T-cell (primary cell): ENCODE measurements at regions of chr18 and their contacts with region 1.

Region 1: GRCh38 chr18:23468753-23469459 is 15.8 kb downstream of the RIOK3 start:
- DNase-seq: no peak
- ATAC-seq: no peak
- H3K4me3 ChIP-seq: no peak overlapping the region
- H3K4me3 Mint-ChIP-seq: no peak overlapping the region
- H3K27ac ChIP-seq: no peak overlapping the region
- H3K27ac Mint-ChIP-seq: no peak overlapping the region
- H3K4me1 ChIP-seq: no peaks in the 10 kb centered on the region
- H3K4me1 Mint-ChIP-seq: peaks cover 0 to 13% (median 1%) of the 10 kb centered on the region in 3 donors
- H3K27me3 ChIP-seq: no peaks in the 10 kb centered on the region
- H3K27me3 Mint-ChIP-seq: no peaks in the 10 kb centered on the region

Region 2: GRCh38 chr18:23406271-23406787 is 62.6 kb before region 1 on chr18:
- CTCF ChIA-PET with region 1: no interaction called
- POLR2A ChIA-PET with region 1: no interaction called
- DNase-seq: no peak
- ATAC-seq: no peak
- H3K4me3 ChIP-seq: no peak overlapping the region
- H3K4me3 Mint-ChIP-seq: no peak overlapping the region
- H3K27ac ChIP-seq: no peak overlapping the region
- H3K27ac Mint-ChIP-seq: no peak overlapping the region
- H3K4me1 ChIP-seq: no peaks in the 10 kb centered on the region
- H3K4me1 Mint-ChIP-seq: no peaks in the 10 kb centered on the region
- H3K27me3 ChIP-seq: no peaks in the 10 kb centered on the region
- H3K27me3 Mint-ChIP-seq: no peaks in the 10 kb centered on the region

Region 3: DNA sequence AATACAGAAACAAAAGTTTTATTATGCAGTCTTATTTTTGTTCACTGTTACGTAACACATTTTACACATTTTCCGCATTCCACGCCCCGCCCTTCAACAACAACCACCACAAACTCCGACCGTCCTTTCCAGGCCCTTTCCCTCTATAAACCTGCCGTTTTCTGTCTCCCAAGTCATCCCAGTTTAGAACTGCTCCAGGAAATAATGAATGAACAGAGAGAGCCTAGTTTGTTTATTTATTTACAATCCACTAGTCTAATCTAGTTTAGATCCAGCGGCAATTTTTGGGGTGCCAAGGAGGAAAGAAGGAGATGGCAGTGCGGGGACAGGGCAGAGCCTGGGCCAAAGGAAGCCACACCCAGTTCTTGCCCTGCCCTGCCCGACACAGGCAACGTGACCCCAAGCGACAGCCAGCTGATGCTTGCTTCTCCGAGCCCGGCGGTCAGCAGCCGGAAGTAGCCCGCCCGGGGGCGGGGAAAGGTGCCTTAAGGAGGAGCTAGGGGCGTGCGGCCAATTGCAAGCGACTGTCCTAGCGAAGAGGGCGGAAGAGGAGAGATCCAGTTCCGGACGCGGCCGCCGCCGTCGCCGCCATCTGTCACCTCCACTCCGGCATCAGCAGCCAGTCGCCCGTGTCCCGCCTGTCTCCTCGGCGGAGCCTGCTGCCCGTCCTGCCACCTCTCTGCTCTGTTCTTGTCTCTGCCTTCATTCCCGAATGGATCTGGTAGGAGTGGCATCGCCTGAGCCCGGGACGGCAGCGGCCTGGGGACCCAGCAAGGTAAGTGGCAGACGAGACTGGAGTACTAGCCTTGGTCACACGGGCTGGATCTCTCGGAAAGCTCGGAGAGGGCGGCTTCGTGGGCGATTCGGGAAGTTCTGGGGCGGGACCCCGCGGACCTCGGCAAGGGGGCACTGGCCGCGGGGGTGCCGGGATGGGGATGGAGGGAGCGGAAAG is 15.9 kb before region 1 on chr18 and contains the start of gene RIOK3:
- CTCF ChIA-PET with region 1: interaction called in 1 of 2 experiments, 3 read pairs
- POLR2A ChIA-PET with region 1: interaction called, 4 to 12 read pairs
- DNase-seq: peak; percentile 68 to 90 (median 78)
- ATAC-seq: peak; percentile 94 to 96 (median 95)
- H3K4me3 ChIP-seq: peak within 1 kb of the TSS; percentile 81 to 96
- H3K4me3 Mint-ChIP-seq: peak within 1 kb of the TSS; percentile 98 to 100 (median 99)
- H3K27ac ChIP-seq: peak within 1 kb of the TSS; percentile 66
- H3K27ac Mint-ChIP-seq: peak within 1 kb of the TSS; percentile 94 to 96
- H3K4me1 ChIP-seq: peaks cover 15 to 19% of the 10 kb centered on the region in 2 experiments
- H3K4me1 Mint-ChIP-seq: peaks cover 46 to 57% (median 48%) of the 10 kb centered on the region in 3 donors
- H3K27me3 ChIP-seq: no peaks in the 10 kb centered on the region
- H3K27me3 Mint-ChIP-seq: no peaks in the 10 kb centered on the region
- total RNA-seq, gene RIOK3: 63.1 to 99.2 (median 65.3) TPM

Region 4: GRCh38 chr18:23529597-23529996 is 60.7 kb after region 1 on chr18:
- CTCF ChIA-PET with region 1: no interaction called
- POLR2A ChIA-PET with region 1: interaction called, 4 to 12 read pairs
- DNase-seq: no peak
- ATAC-seq: no peak
- H3K4me3 ChIP-seq: no peak overlapping the region
- H3K4me3 Mint-ChIP-seq: no peak overlapping the region
- H3K27ac ChIP-seq: no peak overlapping the region
- H3K27ac Mint-ChIP-seq: peak overlapping the region in 1 of 2 donors; percentile 1
- H3K4me1 ChIP-seq: no peaks in the 10 kb centered on the region
- H3K4me1 Mint-ChIP-seq: peaks cover 0 to 4% (median 0%) of the 10 kb centered on the region in 3 donors
- H3K27me3 ChIP-seq: no peaks in the 10 kb centered on the region
- H3K27me3 Mint-ChIP-seq: no peaks in the 10 kb centered on the region

Region 5: GRCh38 chr18:23857756-23858155 is 388.9 kb after region 1 on chr18:
- CTCF ChIA-PET with region 1: no interaction called
- POLR2A ChIA-PET with region 1: no interaction called
- DNase-seq: no peak
- ATAC-seq: no peak
- H3K4me3 ChIP-seq: no peak overlapping the region
- H3K4me3 Mint-ChIP-seq: no peak overlapping the region
- H3K27ac ChIP-seq: no peak overlapping the region
- H3K27ac Mint-ChIP-seq: no peak overlapping the region
- H3K4me1 ChIP-seq: peaks cover 2 to 4% of the 10 kb centered on the region in 2 experiments
- H3K4me1 Mint-ChIP-seq: peaks cover 13 to 16% (median 15%) of the 10 kb centered on the region in 3 donors
- H3K27me3 ChIP-seq: no peaks in the 10 kb centered on the region
- H3K27me3 Mint-ChIP-seq: peaks cover 0 to 2% of the 10 kb centered on the region in 2 donors